Esophagus muscularis mucosa (tissue), 4 donors: ENCODE measurements at regions of chr1 and their contacts with region 1.

Region 1: DNA sequence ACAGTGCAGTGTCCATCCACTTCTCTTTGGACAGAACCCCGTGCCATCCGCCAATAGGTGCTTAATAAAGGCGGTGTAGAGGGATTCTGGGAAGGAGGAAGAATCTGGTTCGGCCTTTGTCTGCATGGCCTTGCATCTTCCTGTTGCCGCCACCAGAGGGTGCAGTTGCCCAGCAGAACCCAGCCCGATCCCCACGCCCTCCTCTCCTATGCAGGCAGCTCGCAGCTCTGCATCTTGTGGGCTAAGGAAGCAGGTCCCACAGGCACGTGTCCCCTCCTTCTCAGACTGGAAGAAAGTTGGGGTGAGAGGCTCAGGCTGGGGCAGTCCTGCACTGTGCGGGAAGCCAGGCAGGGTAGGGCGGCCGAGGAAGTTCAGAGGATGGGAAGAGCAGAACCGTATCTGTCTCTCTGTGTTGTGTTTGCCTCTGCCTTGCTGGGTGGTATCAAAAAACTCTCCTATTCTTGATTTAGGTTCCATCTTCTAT is 20.8 kb downstream of the NAV1 start:
- DNase-seq: no peak
- H3K4me3 ChIP-seq: no peak overlapping the region
- H3K27ac ChIP-seq: no peak overlapping the region
- H3K4me1 ChIP-seq: peaks cover 60 to 70% (median 67%) of the 10 kb centered on the region in 4 donors
- H3K27me3 ChIP-seq: no peaks in the 10 kb centered on the region
- CTCF ChIP-seq: peak; percentile 95 to 98 (median 97)
- EP300 ChIP-seq: no peak
- POLR2A ChIP-seq: no peak

Region 2: DNA sequence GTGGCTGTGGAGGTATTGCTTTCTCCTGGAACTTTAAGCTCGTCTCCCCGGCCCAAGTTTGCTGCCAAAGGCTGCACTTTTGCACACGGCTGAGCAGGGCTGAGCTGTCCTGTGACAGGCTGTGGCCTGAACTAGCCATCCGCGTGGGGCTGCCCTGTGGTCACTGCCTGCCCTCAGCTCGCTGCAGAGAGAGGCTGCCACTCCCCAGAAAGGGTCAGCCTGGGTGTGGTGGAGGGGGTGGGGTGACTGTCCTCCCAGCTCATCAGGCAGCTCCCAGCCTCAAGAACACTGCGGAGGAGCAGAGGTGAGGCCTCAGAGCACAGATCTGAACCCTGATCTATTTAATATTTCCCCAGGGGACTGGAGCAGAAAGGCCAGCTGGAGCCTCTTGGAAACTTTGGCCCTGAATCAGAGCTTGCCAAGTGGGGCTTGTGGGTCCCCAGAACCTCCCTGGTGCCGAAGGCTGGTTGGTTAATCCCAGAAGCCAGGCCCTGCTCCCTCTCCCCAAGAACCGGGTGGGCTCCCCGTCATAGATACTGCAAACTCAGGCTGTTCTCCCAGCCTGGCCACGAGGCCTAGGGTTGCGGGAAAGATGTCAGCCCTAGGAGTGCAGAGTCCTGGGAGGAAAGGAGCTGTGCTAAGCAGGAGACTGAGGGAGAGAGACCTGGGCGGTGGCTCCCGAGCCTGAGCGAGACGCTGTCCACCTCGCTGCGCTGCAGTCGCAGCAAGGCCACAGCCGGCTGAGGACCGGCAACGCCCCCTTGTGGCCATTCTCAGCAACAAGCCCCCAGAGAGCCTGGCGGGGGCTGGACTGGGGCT is 144.1 kb after region 1 on chr1:
- intact Hi-C with region 1: loop called (anchors 1 kb)
- DNase-seq: no peak
- H3K4me3 ChIP-seq: no peak overlapping the region
- H3K27ac ChIP-seq: peak overlapping the region; percentile 57 to 76 (median 68)
- H3K4me1 ChIP-seq: peaks cover 29 to 41% (median 38%) of the 10 kb centered on the region in 4 donors
- H3K27me3 ChIP-seq: no peaks in the 10 kb centered on the region
- CTCF ChIP-seq: peak; percentile 96 to 97 (median 96)
- EP300 ChIP-seq: no peak
- POLR2A ChIP-seq: no peak

Region 3: GRCh38 chr1:201792534-201793305 is 233.0 kb after region 1 on chr1:
- intact Hi-C with region 1: loop called (anchors 2 kb)
- DNase-seq: peak; percentile 96
- H3K4me3 ChIP-seq: no peak overlapping the region
- H3K27ac ChIP-seq: peak overlapping the region; percentile 52 to 75 (median 69)
- H3K4me1 ChIP-seq: peaks cover 44 to 47% (median 45%) of the 10 kb centered on the region in 4 donors
- H3K27me3 ChIP-seq: no peaks in the 10 kb centered on the region
- CTCF ChIP-seq: peak; percentile 96 to 98 (median 97)
- EP300 ChIP-seq: no peak
- POLR2A ChIP-seq: no peak